WTC11 (cell line): ENCODE measurements at regions of chr11 and their contacts with region 1.

Region 1: GRCh38 chr11:355581-356458 is 13.5 kb upstream of the B4GALNT4 start:
- DNase-seq: peak; percentile 93
- ATAC-seq: peak; percentile 86
- H3K4me3 Mint-ChIP-seq: peak overlapping the region; percentile 37
- H3K27ac Mint-ChIP-seq: peak overlapping the region; percentile 94
- H3K4me1 Mint-ChIP-seq: peaks cover 33% of the 10 kb centered on the region
- H3K27me3 Mint-ChIP-seq: peaks cover 11% of the 10 kb centered on the region
- CTCF ChIP-seq: no peak

Region 2: GRCh38 chr11:334264-334994 is 21.4 kb before region 1 on chr11:
- CTCF ChIA-PET with region 1: interaction called, 6 read pairs
- POLR2A ChIA-PET with region 1: interaction called, 10 read pairs
- DNase-seq: peak; percentile 74
- ATAC-seq: peak; percentile 87
- H3K4me3 Mint-ChIP-seq: peak overlapping the region; percentile 59
- H3K27ac Mint-ChIP-seq: peak overlapping the region; percentile 100
- H3K4me1 Mint-ChIP-seq: peaks cover 49% of the 10 kb centered on the region
- H3K27me3 Mint-ChIP-seq: peaks cover 10% of the 10 kb centered on the region
- CTCF ChIP-seq: no peak

Region 3: GRCh38 chr11:342328-342727 is 13.5 kb before region 1 on chr11:
- CTCF ChIA-PET with region 1: interaction called, 10 read pairs
- POLR2A ChIA-PET with region 1: interaction called, 15 read pairs
- DNase-seq: no peak
- ATAC-seq: no peak
- H3K4me3 Mint-ChIP-seq: no peak overlapping the region
- H3K27ac Mint-ChIP-seq: 0 out of 2 replicates have a peak overlapping the region, but pooled peaks have one; percentile 39
- H3K4me1 Mint-ChIP-seq: peaks cover 32% of the 10 kb centered on the region
- H3K27me3 Mint-ChIP-seq: no peaks in the 10 kb centered on the region
- CTCF ChIP-seq: no peak

Region 4: DNA sequence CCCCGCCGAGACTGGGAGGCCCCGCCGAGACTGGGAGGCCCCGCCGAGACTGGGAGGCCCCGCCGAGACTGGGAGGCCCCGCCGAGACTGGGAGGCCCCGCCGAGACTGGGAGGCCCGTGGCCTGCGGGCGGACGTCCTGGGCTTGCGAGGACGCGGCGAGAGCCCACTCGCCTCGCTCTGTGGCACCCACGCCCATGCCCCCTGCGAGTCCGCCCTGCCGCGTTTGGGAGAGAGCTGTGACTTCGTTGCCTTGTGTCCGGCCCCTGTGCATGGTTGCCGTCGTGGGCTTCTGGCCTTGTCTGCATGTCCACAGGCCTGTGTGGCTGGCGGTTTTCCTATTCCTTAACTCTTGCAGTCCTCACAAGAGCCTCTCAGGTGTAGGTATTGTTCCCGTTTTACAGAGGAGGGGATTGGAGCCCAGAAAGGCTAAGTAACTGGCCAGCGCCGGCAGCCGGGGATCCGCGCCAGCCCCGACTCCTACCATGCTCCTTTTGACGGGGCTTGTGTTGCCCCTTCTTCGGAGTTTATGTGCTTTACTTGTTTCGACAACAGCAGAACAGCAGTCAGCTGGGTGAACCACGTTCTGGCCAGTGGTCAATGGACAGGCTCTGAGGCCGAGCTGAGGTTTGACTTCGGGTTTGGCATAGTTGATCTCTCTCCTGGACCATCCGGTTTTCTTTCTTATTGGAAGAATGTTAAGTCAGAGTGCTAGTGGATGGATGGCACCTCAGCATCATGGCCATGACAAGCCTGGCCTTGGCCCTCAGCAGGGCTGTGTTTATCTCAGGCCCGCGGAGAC is 221.2 kb after region 1 on chr11:
- CTCF ChIA-PET with region 1: no interaction called
- POLR2A ChIA-PET with region 1: no interaction called
- DNase-seq: no peak
- ATAC-seq: no peak
- H3K4me3 Mint-ChIP-seq: peak overlapping the region; percentile 90
- H3K27ac Mint-ChIP-seq: peak overlapping the region; percentile 95
- H3K4me1 Mint-ChIP-seq: peaks cover 31% of the 10 kb centered on the region
- H3K27me3 Mint-ChIP-seq: peaks cover 22% of the 10 kb centered on the region
- CTCF ChIP-seq: no peak